ENCODE measurements at regions of chr14 and their contacts with region 1.

Region 1: DNA sequence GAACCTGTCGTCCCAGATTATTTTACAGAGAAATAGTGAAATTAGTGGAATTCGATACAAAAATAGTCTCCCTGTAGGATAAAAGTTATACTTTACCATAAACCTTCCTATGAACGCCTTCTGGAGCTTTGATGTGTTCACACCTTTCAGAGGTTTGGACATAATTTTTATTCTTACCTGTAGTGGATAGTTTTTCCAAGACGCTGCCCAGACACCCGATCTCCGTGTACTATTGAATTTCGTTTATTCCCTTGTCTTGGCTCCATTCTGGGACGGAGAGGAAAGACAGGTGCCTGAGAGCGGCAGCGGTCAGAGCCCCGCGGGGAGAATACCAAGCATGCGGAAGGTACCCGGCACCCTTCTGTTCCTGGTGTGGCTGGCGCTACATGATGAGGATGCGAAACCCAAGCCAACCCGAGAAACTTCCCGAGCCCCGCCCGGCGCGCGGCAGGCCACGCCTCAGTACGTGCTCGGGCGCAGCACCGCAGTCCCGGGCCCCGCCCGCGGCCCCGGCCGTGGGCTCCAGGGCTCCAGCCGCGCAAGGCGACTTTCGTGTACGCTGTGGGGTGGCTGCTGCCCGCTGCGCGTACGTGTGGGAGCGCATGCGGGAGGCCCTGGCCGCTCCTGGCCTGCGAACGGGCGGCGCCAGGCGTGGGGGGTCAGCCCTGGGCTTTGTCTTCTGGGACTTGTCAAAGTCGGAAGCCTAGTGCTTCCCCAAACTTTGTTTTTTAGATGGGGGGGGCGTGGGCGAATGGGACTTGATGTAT is 11.3 kb upstream of the SNAPC1 start:
- DNase-seq: peak; percentile 95
- ATAC-seq: peak; percentile 98

Region 2: DNA sequence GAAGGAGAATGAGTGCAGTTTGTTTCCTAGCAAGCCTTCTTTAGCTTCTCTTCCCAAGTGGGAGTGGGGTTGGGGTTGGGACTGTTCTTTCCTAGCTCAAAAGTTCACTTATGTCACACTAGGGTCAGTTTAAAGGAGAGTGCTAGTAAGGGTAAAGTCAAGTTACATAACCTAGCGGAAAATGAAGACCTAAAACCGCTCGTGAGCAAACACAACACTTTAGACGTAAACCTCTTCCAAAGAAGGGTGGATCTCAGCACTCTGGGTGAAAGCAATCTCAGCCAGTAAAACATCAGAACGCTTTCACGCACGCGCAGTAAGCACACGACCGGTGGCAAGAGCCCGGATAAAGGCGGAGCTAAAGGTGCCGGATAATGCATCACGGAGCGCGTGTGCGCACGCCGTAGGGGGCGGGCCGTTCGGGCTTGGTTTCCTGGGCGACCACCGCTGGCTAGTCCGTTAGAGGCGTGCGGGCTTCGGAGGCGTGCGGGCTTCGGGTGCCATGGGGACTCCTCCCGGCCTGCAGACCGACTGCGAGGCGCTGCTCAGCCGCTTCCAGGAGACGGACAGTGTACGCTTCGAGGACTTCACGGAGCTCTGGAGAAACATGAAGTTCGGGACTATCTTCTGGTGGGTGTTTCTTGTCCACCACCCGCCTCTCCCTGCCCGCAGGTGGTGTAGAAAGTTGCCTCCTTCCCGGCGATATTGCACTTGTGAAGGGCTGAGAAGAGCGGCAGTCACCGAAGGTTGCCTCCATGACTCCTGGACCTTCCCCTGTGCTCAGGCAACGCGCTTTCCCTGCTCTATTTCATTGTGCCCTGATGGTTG is 11.3 kb after region 1 on chr14 and contains the start of gene SNAPC1:
- intact Hi-C with region 1: loop called (anchors 1 kb)
- DNase-seq: peak; percentile 98
- ATAC-seq: peak; percentile 99
- total RNA-seq, gene SNAPC1: 11.8 TPM

Region 3: DNA sequence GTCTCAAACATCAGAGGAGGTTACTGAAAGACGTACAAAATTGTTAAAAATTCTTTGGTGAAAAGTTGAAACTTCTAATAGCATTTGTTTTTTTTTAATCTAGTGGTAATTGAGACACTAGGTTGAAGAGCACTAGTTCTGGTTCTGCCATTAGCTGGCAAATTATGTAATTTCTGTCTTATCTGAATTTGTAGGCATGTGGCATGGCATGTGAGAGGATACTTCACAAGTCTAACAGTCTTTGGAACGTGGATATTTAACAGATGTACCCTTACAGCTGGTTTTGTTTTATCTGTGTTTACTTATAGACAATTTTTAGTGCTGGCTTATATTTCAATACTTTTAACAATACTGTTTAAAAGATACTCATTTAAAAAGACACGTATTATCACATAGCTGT is 17.3 kb after region 1 on chr14:
- intact Hi-C with region 1: loop called (anchors 2 kb)
- DNase-seq: no peak
- ATAC-seq: peak; percentile 49

Region 4: GRCh38 chr14:61847861-61848260 is 97.0 kb after region 1 on chr14:
- intact Hi-C with region 1: no loop called
- DNase-seq: no peak
- ATAC-seq: no peak